Dendritic cell treated with granulocyte-macrophage colony-stimulating factor and Interleukin-4, amounts not matched to agents 40 ng/mL and 50 ng/mL, for 4 days (primary cell): ENCODE measurements at regions of chr2 and their contacts with region 1.

Region 1: GRCh38 chr2:27409321-27410073 is at the start of gene PPM1G:
- H3K4me3 Mint-ChIP-seq: peak within 1 kb of the TSS; percentile 96
- H3K27ac Mint-ChIP-seq: peak within 1 kb of the TSS; percentile 94
- H3K4me1 Mint-ChIP-seq: peaks cover 40% of the 10 kb centered on the region
- H3K27me3 Mint-ChIP-seq: peaks cover 3% of the 10 kb centered on the region

Region 2: DNA sequence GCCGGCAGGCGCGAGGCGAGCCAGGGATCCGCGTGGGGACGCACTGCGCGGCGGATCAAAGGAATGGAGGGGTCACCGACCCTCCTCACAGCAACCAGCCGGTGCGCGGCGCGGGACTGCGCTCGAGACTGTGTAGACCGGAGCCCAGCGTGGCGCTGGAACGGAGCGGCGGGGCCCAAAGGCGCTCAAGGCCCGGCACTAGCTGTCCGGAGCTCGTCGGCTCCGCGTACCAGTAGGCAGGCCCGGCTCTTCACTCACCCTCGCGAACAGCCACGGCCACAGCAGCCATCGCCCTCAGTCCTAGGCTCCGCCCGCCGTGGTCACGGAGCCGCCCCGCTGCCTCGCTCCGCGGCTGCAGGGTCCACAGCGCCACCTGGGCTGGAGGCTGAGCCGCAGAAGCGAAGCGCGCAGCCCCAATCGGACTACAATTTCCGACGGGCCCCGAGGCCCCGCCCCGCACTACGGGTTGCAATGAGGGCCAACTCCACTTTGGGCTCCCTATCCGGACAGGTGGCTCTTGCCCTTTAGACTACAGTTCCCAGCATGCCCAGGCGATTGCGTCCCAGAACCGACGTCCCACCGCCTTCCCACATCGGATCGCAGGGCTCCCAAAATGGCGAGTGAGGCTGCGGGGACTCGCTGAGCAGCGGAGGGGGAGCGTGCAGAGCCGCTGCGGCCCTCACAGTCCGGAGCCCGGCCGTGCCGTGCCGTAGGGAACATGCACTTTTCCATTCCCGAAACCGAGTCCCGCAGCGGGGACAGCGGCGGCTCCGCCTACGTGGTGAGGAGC is 39.3 kb before region 1 on chr2 and contains the starts of genes EIF2B4 and SNX17:
- intact Hi-C with region 1: loop called (anchors 5 kb)
- H3K4me3 Mint-ChIP-seq: peak within 1 kb of the TSS; percentile 98
- H3K27ac Mint-ChIP-seq: peak within 1 kb of the TSS; percentile 95
- H3K4me1 Mint-ChIP-seq: peaks cover 58% of the 10 kb centered on the region
- H3K27me3 Mint-ChIP-seq: no peaks in the 10 kb centered on the region

Region 3: GRCh38 chr2:27380626-27381545 is 28.6 kb before region 1 on chr2 and contains the start of gene ZNF513:
- intact Hi-C with region 1: loop called (anchors 1 kb)
- H3K4me3 Mint-ChIP-seq: peak within 1 kb of the TSS; percentile 90
- H3K27ac Mint-ChIP-seq: peak within 1 kb of the TSS; percentile 97
- H3K4me1 Mint-ChIP-seq: peaks cover 81% of the 10 kb centered on the region
- H3K27me3 Mint-ChIP-seq: no peaks in the 10 kb centered on the region

Region 4: DNA sequence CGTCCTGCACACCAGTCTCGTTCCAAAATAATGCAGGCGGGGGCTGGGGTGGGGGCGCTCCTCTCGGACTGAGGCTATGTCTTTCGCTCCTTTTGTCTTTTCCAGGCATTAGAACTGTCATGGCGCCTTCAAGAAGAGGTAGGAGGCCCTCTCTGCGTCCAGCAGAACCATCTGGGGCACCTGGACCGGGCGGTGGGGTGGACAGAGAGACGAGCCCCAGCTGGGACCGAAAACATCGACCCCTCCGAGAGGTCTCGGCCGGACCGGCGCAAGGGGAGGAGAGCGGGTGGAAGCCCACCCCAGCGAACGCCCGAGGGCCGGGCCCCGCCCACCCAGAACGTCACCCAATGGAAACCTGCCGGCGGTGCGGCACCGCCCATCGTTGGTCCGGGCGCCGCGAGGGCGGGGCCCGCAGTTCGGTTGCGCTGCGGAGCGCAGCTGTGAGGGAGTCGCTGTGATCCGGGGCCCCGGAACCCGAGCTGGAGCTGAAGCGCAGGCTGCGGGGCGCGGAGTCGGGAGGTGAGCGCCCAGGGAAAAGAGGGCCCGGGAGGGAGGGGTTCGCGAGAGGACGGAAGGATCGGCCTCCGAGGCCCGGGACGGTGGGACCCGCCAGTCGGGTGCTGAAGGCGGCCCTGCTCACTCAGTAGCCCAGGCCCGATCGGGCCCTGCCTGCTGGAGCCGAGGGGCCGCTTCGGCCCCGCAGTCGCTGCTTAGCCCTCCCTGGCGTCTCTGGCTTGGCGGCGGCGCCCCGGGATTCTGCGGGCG is 18.9 kb after region 1 on chr2 and contains the start of gene NRBP1:
- intact Hi-C with region 1: loop called (anchors 1 kb)
- H3K4me3 Mint-ChIP-seq: peak within 1 kb of the TSS; percentile 96
- H3K27ac Mint-ChIP-seq: peak within 1 kb of the TSS; percentile 99
- H3K4me1 Mint-ChIP-seq: peaks cover 38% of the 10 kb centered on the region
- H3K27me3 Mint-ChIP-seq: no peaks in the 10 kb centered on the region

Region 5: DNA sequence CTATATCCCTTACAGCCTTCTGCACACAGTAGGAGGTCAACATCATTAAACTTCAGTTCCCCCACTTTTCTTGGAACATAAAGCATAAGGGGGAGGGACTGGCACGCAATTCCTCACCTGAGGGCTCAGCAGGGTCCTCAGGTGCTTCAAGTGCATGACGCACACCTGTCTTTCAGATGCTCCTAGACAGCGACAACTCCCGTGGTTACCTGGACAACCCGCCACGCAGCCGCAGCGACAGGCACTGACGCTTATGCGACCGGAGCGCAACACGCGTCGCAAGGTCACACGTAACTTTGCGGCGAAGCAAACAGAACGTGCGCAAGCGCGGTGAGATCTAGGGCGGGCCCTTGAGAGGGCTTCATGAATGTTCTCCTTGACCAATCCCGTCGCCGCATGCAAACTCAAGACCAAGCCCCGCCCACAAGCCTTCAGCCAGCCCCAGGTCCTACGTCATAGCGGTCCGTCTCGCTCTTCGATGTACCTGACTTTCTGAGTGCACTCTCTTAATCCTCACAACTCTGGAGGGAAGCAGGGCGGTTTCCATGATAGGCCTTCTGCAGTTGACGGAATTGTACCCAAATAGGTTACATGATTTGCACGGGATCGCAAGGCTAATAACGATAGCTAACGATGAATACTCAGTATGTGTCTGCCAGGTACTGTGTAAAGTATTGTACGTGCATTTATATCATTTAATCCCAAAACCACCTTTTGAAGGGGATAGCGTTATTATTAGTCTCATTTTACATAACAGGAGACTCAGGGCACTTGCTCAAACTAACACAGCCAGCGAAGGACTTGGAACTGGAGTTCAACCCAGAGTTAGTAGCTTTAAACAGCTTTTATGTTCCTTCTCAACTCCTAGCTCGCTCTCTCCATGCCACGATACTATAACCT is 80.3 kb after region 1 on chr2 and contains the start of gene IFT172:
- intact Hi-C with region 1: loop called (anchors 1 kb)
- H3K4me3 Mint-ChIP-seq: peak within 1 kb of the TSS; percentile 80
- H3K27ac Mint-ChIP-seq: peak within 1 kb of the TSS; percentile 76
- H3K4me1 Mint-ChIP-seq: peaks cover 28% of the 10 kb centered on the region
- H3K27me3 Mint-ChIP-seq: peaks cover 26% of the 10 kb centered on the region

Region 6: DNA sequence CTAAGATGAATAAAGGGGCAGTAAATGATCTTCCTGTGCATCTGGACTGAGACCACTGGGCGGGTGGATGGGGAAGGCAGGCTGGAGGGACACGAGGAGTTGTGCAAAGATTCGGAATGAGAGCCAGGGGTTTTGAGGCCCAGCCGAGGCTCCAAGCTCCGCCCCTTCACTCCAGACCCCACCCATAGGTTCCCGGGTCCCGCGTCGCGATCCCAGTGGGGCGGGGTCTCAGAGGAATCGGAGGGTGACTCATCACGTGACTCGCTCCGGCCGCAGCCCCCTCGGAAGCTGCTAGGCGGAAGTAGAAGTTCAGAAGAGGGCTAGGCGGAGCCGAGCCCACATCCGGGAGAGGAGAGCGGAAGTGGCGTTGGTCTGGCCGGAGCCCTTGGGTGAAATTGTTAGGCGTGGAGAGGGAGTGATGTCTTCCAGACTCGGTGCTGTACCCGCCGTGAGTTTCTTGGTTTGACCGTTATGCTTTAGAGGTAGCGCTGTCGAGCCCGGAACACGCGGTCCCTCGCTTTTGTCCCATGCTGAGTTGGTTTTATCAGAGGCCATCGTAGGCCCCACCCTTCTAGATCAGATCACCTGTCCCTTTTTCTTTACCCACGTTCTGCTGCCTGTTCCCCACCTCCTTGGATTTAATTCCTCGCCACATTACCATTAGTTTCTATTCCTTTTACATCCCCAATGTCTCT is 173.3 kb after region 1 on chr2 and contains the start of gene ZNF512:
- intact Hi-C with region 1: loop called (anchors 10 kb)
- H3K4me3 Mint-ChIP-seq: peak within 1 kb of the TSS; percentile 93
- H3K27ac Mint-ChIP-seq: peak within 1 kb of the TSS; percentile 91
- H3K4me1 Mint-ChIP-seq: peaks cover 42% of the 10 kb centered on the region
- H3K27me3 Mint-ChIP-seq: no peaks in the 10 kb centered on the region